ENCODE measurements at regions of chr2 and their contacts with region 1.

Region 1: DNA sequence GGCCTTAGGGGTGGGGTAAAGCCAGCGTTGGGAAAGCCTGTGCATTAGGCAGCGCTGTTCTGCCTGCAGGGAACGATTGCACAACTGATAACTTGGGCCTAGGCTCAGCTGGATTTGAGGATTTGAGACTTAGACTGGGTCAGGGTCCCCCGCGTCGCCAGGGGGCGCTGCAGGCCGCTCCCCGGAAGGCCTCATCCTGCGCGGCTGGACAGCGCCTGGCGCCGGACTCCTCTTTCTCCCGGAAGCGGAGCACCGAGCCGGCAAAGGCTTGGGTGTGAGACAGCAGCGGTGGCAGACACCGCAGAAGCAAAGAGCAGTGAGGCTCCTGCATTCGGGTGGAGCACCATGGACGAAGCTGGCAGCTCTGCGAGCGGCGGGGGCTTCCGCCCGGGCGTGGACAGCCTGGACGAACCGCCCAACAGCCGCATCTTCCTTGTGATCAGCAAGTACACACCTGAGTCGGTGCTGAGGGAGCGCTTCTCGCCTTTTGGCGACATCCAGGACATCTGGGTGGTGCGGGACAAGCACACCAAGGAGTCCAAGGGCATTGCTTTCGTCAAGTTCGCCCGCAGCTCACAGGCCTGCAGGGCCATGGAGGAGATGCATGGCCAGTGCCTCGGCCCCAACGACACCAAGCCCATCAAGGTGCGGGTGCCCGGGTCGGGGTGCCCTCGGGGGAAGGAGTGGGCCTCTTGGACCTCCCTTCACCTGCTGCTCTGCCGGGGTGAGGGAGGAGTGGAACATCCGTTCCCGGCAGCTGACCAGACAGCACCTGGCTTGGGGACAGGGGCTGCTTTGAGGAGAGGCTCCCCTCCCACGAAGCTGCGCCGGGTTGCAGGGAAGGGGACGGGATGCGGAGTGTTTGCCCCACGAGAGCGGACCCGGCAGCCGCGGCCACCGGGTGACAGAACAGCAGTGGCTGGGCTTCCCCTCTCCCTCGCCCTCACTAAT is at the start of gene RBM45:
- H3K4me3 ChIP-seq: peak within 1 kb of the TSS; percentile 67
- H3K27ac ChIP-seq: peak within 1 kb of the TSS; percentile 69
- H3K4me1 ChIP-seq: no peaks in the 10 kb centered on the region
- CTCF ChIP-seq: peak; percentile 97

Region 2: DNA sequence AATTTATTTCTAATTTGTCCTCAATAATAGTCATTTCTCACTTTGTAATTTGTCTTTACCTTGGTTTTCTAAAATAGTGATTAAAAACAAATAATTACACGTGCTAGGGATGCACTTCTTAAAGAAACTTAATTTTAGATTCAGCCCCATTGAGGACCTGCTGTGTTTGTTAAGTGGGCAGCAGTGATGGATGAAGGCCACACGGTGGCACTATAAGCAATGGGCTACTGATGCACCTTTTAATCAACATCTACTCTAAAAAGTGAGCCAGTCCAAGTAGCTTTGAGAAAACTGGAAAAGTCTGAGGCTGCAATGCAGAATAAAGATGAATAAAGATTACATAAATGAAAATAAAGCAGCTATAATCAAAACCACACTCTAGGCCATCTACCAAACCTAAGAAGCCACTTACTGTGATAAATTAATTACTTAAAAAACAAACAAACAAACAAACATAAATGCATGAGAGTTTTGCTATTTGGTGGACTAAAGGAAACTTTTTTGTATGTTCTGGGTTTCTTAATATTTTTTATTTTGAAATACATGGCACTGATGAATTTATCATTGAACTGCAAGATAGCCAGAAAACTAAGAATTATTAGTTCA is 129.2 kb before region 1 on chr2:
- CTCF ChIA-PET with region 1: interaction called, 15 read pairs
- POLR2A ChIA-PET with region 1: interaction called, 5 read pairs
- H3K4me3 ChIP-seq: no peak overlapping the region
- H3K27ac ChIP-seq: no peak overlapping the region
- H3K4me1 ChIP-seq: no peaks in the 10 kb centered on the region; the same call in 1 of the 2 replicates
- CTCF ChIP-seq: peak; percentile 56

Region 3: DNA sequence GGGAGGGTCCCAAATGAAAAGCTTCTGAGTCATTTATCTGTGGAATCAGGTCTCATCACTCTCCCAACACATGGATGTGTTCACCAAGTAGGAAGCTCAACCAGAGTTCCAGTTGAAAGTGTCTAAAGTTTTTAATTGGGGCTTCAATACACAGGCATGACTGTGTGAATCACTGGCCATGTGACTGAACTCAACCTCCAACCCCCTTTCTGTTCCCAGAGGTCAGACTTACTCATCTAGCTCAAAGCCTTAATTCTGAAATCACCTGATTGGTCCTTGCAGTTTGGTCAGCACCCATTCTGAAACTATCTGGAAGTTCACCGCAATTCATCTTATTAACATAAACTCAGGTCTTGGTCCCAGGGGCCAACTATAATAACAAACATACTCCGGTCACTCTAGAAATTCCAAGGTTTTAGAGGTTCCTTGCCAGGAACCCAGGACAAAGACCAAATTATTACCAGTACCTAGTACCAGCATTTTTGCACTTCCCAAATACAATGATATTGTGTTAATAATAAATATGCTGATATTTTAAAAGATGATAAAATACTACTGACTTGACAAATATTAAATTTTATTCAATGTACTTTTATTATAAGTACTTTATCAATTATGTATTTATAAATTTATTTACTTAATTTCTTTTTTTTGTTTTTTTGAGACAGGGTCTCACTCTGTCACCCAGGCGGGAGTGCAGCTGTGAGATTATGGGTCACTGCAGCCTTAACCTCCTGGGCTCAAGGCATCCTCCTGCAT is 11.0 kb before region 1 on chr2:
- CTCF ChIA-PET with region 1: interaction called, 21 read pairs
- POLR2A ChIA-PET with region 1: no interaction called
- H3K4me3 ChIP-seq: no peak overlapping the region
- H3K27ac ChIP-seq: no peak overlapping the region
- H3K4me1 ChIP-seq: no peaks in the 10 kb centered on the region
- CTCF ChIP-seq: no peak

Region 4: GRCh38 chr2:178128836-178129630 is 16.6 kb after region 1 on chr2:
- CTCF ChIA-PET with region 1: interaction called, 28 read pairs
- POLR2A ChIA-PET with region 1: interaction called, 5 read pairs
- H3K4me3 ChIP-seq: no peak overlapping the region
- H3K27ac ChIP-seq: no peak overlapping the region
- H3K4me1 ChIP-seq: no peaks in the 10 kb centered on the region
- CTCF ChIP-seq: no peak

Region 5: DNA sequence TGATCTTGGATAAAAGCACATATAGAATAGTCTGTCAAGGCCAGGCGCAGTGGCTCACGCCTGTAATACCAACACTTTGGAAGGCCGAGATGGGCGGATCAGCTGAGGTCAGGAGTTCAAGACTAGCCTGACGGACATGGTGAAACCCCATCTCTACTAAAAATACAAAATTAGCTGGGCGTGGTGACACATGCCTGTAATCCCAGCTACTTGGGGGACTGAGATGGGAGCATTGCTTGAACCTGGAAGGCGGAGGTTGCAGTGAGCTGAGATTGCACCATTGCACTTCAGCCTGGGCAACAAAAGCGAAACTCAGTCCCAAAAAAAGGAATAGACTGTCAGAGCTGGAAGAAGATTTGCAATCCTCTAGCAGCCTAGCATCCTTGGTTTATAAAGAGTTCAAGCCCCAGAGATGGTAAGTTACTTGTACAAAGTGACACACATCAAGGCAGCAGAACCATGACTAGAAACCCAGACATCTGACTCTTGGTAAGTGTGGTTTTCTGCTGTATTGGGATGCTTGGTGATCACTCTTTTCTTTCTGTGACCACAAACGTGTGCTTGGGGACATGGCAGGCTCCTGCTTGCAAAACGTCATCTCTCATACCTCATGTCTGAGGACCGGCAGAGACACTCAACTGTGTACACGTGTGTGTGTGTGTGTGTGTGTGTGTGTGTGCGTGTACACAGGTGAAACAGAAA is 150.8 kb after region 1 on chr2:
- CTCF ChIA-PET with region 1: no interaction called
- POLR2A ChIA-PET with region 1: no interaction called
- H3K4me3 ChIP-seq: no peak overlapping the region
- H3K27ac ChIP-seq: no peak overlapping the region
- H3K4me1 ChIP-seq: no peaks in the 10 kb centered on the region
- CTCF ChIP-seq: no peak

Region 6: GRCh38 chr2:178414266-178415247 is 302.1 kb after region 1 on chr2:
- CTCF ChIA-PET with region 1: interaction called, 37 read pairs
- POLR2A ChIA-PET with region 1: interaction called, 13 read pairs
- H3K4me3 ChIP-seq: peak overlapping the region; percentile 67
- H3K27ac ChIP-seq: peak overlapping the region; percentile 88
- H3K4me1 ChIP-seq: no peaks in the 10 kb centered on the region
- CTCF ChIP-seq: peak; percentile 96

Region 7: DNA sequence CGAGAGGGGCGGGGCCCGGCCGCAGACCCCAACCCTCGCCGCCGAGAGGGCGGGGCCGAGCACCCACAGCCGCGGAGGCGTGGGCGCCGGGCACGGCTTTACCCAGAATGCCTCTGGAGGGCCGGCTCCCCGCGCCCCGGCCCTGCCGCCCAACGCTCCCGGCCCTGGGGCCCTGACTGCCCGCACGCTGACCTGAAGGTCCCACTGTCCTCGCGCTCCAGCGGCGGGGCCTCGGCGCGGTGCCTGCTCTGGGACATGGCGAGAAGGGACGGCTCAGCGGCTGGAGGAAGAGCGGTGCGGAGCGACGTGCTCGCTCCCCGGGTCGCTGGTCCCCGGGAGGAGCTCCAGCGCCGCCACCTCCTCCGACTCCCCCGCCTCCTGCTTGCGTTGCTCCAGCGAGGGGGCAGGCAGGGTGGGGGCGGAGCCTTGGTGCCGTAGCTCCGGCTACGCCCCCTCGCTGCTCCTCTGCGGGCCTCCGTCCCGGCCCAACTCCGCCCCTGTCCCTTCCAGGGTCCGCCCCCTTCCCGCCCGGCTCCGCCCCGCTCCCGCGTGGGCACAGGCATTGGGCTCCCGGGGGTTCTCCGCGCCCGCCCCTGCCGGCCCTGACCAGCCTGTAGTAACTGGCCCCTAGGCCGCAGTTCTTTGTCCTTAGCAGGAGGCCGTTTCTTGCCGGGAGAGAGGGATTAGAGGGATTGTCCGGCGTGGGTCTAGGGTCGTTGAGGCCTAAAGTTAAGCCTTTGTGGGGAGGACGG is 338.5 kb after region 1 on chr2 and contains the starts of genes PJVK and PRKRA:
- CTCF ChIA-PET with region 1: interaction called, 3 read pairs
- POLR2A ChIA-PET with region 1: interaction called, 15 read pairs
- H3K4me3 ChIP-seq: peak within 1 kb of the TSS; percentile 92
- H3K27ac ChIP-seq: peak within 1 kb of the TSS; percentile 83
- H3K4me1 ChIP-seq: 0 out of 2 replicates have a peak, but pooled peaks cover 9% of the 10 kb centered on the region
- CTCF ChIP-seq: peak; percentile 78